ENCODE measurements at regions of chr14 and their contacts with region 1.

Region 1: DNA sequence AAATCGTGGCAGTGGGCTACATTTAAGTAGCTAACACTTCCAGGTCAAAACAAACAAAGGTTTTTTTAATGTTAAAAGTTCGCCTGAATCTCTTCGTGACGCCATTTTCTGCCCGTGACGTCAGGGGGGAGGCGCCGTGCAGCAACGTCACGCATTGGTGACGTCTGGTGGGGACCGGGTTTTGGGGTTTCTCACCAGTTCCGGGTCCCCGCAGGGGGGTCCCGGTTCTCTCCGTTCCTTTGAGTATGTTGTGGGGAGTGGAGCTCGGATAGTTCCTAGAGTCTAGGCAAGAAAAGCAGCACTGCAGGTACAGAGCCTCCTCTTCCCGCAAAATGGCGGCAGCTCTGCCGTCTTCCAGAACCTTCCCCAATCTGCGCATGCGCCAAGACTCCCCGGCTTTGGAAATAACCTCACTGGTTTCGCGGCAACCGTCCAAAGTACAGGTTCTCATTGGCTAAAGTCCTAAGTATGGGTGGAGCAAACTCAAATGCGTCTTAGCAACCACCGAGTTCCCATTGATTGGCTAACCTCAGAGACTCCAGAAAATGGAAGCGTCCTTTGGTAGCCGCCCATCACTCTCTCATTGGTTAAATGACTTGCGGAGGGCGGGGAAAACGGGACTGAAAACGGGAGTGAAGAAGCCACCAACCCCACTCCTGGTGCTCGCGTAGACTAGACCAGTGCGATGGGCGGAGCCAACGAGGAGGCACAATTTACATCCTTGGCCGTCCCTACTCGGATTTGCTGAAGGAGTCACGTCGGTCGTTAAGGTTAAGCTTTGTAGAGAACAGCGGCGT is at the start of gene RBM23:
- DNase-seq: peak; percentile 100
- H3K4me3 Mint-ChIP-seq: peak within 1 kb of the TSS; percentile 95
- H3K27ac Mint-ChIP-seq: peak within 1 kb of the TSS; percentile 100
- H3K4me1 Mint-ChIP-seq: peaks cover 27% of the 10 kb centered on the region
- H3K27me3 Mint-ChIP-seq: peaks cover 2% of the 10 kb centered on the region
- total RNA-seq, gene RBM23: 82.7 and 90.2 TPM in 2 replicates

Region 2: DNA sequence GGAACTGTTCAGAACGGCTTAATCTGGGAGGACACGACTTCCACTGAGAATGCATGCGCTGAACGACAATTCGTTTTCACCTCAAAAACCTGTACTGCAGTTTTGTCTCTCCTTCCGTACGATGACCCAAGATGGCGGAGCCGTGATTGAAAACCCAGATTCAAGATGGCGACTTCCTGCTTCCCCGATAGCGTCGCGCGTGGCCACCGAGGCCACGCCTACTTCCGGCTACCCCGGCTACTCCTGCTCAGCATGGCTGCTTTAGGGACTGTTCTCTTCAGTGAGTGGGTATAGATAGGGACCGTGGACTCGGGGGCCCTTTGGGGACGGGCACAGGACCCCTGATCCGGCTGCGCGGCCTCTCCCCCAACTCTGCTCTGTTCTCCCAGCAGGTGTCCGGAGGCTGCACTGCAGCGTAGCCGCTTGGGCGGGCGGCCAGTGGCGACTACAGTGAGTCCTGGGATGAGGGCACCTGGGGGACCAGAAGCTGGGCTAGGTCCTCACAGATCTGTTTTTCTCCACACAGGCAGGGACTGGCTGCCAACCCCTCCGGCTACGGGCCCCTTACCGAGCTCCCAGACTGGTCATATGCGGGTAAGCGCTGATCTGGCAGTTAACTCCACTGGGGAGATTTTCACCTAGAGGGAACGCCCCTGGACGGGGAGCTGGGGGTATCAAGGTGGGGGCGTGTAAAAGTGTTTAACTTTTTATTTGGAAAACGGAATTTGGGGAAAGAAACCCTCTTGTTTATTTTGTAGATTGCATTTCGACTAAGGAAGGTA is 89.2 kb before region 1 on chr14 and contains the start of gene MRPL52:
- intact Hi-C with region 1: loop called (anchors 2 kb)
- DNase-seq: peak; percentile 96
- H3K4me3 Mint-ChIP-seq: peak within 1 kb of the TSS; percentile 98
- H3K27ac Mint-ChIP-seq: peak within 1 kb of the TSS; percentile 95
- H3K4me1 Mint-ChIP-seq: peaks cover 19% of the 10 kb centered on the region
- H3K27me3 Mint-ChIP-seq: no peaks in the 10 kb centered on the region
- total RNA-seq, gene MRPL52: 189 and 194 TPM in 2 replicates